ENCODE measurements at regions of chr2 and their contacts with region 1.

Region 1: GRCh38 chr2:232142049-232142448 is 180.5 kb downstream of the DIS3L2 start:
- DNase-seq: peak; percentile 60
- H3K4me3 ChIP-seq: no peak overlapping the region
- H3K27ac ChIP-seq: no peak overlapping the region
- H3K4me1 ChIP-seq: peaks cover 25% of the 10 kb centered on the region
- CTCF ChIP-seq: peak; percentile 90

Region 2: GRCh38 chr2:231925303-231926179 is 216.5 kb before region 1 on chr2:
- CTCF ChIA-PET with region 1: no interaction called
- POLR2A ChIA-PET with region 1: no interaction called
- intact Hi-C with region 1: loop called (anchors 1 kb)
- DNase-seq: peak; percentile 67
- H3K4me3 ChIP-seq: no peak overlapping the region
- H3K27ac ChIP-seq: no peak overlapping the region
- H3K4me1 ChIP-seq: no peaks in the 10 kb centered on the region
- CTCF ChIP-seq: peak; percentile 84

Region 3: DNA sequence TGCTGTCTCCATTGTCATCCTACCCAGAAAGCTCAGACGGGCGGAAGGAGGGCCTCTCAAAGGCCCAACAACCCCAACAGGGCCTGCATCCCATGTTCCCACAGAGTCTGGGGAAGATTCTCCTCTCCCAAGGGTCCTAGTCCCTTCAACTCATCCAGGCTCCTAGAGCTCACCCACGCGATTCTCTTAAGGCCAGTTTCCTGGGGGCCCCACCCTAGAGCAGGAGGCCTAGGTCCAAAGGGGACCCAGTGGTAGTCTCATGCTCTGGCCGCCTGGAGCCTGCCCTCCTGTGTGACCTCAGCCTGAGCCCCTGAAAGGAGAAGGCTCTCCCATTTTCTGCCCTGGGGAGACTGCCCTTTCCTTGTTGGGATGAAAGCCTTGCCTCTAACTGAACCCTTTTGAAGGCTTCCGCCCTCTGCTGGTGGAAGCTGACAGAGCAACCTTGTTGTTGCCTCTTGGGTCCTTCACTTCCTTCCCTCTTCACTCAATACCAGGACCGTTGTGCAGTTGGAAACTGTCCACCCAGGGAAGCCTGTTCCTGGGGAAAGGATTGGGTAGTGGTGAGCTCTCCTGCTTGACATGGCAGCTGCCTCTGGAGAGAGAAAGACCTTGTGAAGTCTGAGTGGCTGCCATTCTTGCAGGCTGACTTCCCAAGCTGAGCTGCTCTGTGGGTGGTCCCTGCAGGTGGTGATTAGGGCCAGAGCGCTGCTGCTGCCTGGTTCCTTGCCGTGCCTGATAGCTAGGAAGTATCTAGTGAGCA is 150.5 kb after region 1 on chr2:
- CTCF ChIA-PET with region 1: no interaction called
- POLR2A ChIA-PET with region 1: no interaction called
- intact Hi-C with region 1: loop called (anchors 10 kb)
- DNase-seq: peak; percentile 75
- H3K4me3 ChIP-seq: no peak overlapping the region
- H3K27ac ChIP-seq: no peak overlapping the region
- H3K4me1 ChIP-seq: peaks cover 4% of the 10 kb centered on the region
- CTCF ChIP-seq: peak; percentile 93

Region 4: GRCh38 chr2:232327105-232328041 is 185.3 kb after region 1 on chr2:
- CTCF ChIA-PET with region 1: no interaction called
- POLR2A ChIA-PET with region 1: no interaction called
- intact Hi-C with region 1: loop called (anchors 1 kb)
- DNase-seq: peak; percentile 67
- H3K4me3 ChIP-seq: no peak overlapping the region
- H3K27ac ChIP-seq: no peak overlapping the region
- H3K4me1 ChIP-seq: peaks cover 14% of the 10 kb centered on the region
- CTCF ChIP-seq: peak; percentile 78

Region 5: DNA sequence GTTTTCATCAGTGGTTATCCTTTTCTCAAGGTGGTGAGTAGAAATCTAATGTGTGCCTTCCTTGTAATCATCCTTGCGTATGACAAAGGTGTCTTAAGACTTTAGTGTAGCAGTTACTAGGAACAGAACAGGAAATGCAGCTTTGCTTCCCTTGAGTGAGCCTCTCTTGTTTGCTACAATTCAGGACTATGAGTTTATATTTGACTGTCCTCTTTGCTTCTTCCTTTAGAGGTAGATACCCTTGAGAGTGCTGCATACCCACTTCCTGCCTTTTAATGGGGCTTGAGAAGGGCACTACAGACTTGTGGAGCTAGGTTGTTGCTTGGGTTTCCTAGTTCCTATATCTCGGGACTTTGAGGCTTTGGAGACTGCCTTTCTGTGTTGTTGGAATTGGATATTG is 630.5 kb after region 1 on chr2:
- CTCF ChIA-PET with region 1: no interaction called
- POLR2A ChIA-PET with region 1: no interaction called
- intact Hi-C with region 1: no loop called
- DNase-seq: peak; percentile 87
- H3K4me3 ChIP-seq: peak overlapping the region; percentile 39
- H3K27ac ChIP-seq: peak overlapping the region; percentile 77
- H3K4me1 ChIP-seq: peaks cover 28% of the 10 kb centered on the region
- CTCF ChIP-seq: no peak

Measured in OCI-LY7 (cell line).